ENCODE measurements at regions of chr14 and their contacts with region 1.

Region 1: GRCh38 chr14:76710056-76711010 is 50.9 kb upstream of the VASH1 start:
- DNase-seq: peak; percentile 44 to 50
- ATAC-seq: peak; percentile 67 to 80; a peak in 4 of 6 replicates
- H3K4me3 ChIP-seq: no peak overlapping the region
- H3K27ac ChIP-seq: no peak overlapping the region
- H3K4me1 ChIP-seq: no peaks in the 10 kb centered on the region
- CTCF ChIP-seq: peak; percentile 78
- EP300 ChIP-seq: no peak
- POLR2A ChIP-seq: no peak
- RAD21 ChIP-seq: peak; percentile 63 to 68

Region 2: DNA sequence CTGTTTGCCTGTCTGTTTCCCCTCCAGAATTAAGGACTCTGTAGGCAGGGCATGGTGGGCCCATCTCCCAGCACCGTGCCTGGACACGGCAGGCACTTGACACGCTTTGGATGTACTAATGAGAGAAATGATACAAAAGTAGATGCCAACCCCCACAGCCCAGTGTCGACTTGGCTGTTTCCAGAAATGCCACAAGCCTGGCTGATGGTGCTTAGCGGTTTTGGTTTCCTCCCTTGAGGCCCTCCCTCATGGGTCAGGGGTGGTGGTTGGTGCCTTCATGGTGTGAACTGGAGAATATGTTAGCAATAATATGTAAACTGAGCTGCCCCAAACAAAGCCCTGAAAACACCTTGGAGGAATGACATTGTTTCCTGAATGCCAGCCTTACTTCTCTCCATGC is 389.8 kb before region 1 on chr14:
- CTCF ChIA-PET with region 1: no interaction called
- POLR2A ChIA-PET with region 1: no interaction called
- DNase-seq: no peak
- ATAC-seq: no peak
- H3K4me3 ChIP-seq: no peak overlapping the region
- H3K27ac ChIP-seq: no peak overlapping the region
- H3K4me1 ChIP-seq: no peaks in the 10 kb centered on the region
- CTCF ChIP-seq: no peak
- EP300 ChIP-seq: no peak
- POLR2A ChIP-seq: no peak
- RAD21 ChIP-seq: no peak

Region 3: DNA sequence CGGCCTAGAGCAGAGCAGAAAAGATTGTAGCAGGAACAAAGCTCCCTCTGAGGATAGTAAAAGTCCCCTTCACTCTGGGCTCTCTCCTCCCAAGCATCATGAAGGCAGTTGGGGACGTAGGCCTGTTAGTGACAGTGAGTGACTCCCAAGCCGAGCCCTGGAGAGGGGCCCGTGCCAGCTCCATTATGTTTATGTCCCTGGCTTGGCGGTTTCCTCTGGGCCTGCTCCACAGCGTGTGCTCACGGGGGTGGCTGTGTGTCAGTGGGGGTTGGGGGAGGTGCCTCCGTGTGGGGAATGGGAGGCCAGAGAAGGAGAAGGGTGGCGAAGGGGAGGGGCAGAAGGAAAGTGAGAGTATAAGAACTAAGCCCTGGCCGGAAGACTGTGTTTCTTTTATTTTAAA is 119.1 kb before region 1 on chr14:
- CTCF ChIA-PET with region 1: no interaction called
- POLR2A ChIA-PET with region 1: no interaction called
- DNase-seq: no peak
- ATAC-seq: no peak
- H3K4me3 ChIP-seq: no peak overlapping the region
- H3K27ac ChIP-seq: no peak overlapping the region
- H3K4me1 ChIP-seq: no peaks in the 10 kb centered on the region
- CTCF ChIP-seq: no peak
- EP300 ChIP-seq: no peak
- POLR2A ChIP-seq: no peak
- RAD21 ChIP-seq: no peak

Region 4: GRCh38 chr14:76672123-76672522 is 38.2 kb before region 1 on chr14:
- CTCF ChIA-PET with region 1: no interaction called
- POLR2A ChIA-PET with region 1: no interaction called
- DNase-seq: no peak
- ATAC-seq: no peak
- H3K4me3 ChIP-seq: no peak overlapping the region
- H3K27ac ChIP-seq: no peak overlapping the region
- H3K4me1 ChIP-seq: no peaks in the 10 kb centered on the region
- CTCF ChIP-seq: no peak
- EP300 ChIP-seq: no peak
- POLR2A ChIP-seq: no peak
- RAD21 ChIP-seq: no peak

Region 5: GRCh38 chr14:76687611-76688382 is 22.5 kb before region 1 on chr14:
- CTCF ChIA-PET with region 1: interaction called, 62 read pairs
- POLR2A ChIA-PET with region 1: no interaction called
- DNase-seq: no peak
- ATAC-seq: no peak
- H3K4me3 ChIP-seq: no peak overlapping the region
- H3K27ac ChIP-seq: no peak overlapping the region
- H3K4me1 ChIP-seq: no peaks in the 10 kb centered on the region
- CTCF ChIP-seq: no peak
- EP300 ChIP-seq: no peak
- POLR2A ChIP-seq: no peak
- RAD21 ChIP-seq: no peak

Region 6: GRCh38 chr14:76699939-76700590 is 10.3 kb before region 1 on chr14:
- CTCF ChIA-PET with region 1: interaction called, 62 read pairs
- POLR2A ChIA-PET with region 1: no interaction called
- DNase-seq: no peak
- ATAC-seq: no peak
- H3K4me3 ChIP-seq: no peak overlapping the region
- H3K27ac ChIP-seq: no peak overlapping the region
- H3K4me1 ChIP-seq: 0 out of 3 replicates have a peak, but pooled peaks cover 3% of the 10 kb centered on the region
- CTCF ChIP-seq: no peak
- EP300 ChIP-seq: no peak
- POLR2A ChIP-seq: no peak
- RAD21 ChIP-seq: no peak

Region 7: DNA sequence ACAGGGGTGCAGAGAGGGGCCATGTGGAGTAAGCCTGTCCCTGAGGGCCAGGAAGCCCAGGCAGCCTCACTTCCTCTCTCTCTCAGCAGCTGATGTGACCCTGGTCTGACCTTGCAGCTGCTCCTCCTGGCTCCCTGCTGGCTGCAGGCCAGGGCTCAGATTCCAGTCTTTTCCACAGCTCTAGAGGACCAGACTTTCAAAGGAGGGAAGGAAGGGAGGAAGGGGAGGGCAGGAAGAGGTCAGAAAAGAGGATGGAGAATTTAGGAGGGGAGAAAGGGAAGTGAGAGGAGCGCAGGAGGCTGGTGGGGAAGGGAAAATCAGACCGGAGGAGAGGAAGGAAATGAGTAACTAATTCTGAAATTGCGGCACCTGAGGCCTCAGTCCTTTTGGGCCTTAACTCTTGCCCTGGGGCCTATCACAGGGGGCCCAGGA is 10.1 kb after region 1 on chr14:
- CTCF ChIA-PET with region 1: interaction called, 46 read pairs
- POLR2A ChIA-PET with region 1: no interaction called
- DNase-seq: no peak
- ATAC-seq: peak; percentile 26 to 54; a peak in 3 of 6 replicates
- H3K4me3 ChIP-seq: no peak overlapping the region
- H3K27ac ChIP-seq: peak overlapping the region in 1 of 2 experiments; percentile 43; a peak in 2 of 6 replicates
- H3K4me1 ChIP-seq: peaks cover 8% of the 10 kb centered on the region; the same call in 2 of the 3 replicates
- CTCF ChIP-seq: no peak
- EP300 ChIP-seq: no peak
- POLR2A ChIP-seq: no peak
- RAD21 ChIP-seq: no peak

Region 8: DNA sequence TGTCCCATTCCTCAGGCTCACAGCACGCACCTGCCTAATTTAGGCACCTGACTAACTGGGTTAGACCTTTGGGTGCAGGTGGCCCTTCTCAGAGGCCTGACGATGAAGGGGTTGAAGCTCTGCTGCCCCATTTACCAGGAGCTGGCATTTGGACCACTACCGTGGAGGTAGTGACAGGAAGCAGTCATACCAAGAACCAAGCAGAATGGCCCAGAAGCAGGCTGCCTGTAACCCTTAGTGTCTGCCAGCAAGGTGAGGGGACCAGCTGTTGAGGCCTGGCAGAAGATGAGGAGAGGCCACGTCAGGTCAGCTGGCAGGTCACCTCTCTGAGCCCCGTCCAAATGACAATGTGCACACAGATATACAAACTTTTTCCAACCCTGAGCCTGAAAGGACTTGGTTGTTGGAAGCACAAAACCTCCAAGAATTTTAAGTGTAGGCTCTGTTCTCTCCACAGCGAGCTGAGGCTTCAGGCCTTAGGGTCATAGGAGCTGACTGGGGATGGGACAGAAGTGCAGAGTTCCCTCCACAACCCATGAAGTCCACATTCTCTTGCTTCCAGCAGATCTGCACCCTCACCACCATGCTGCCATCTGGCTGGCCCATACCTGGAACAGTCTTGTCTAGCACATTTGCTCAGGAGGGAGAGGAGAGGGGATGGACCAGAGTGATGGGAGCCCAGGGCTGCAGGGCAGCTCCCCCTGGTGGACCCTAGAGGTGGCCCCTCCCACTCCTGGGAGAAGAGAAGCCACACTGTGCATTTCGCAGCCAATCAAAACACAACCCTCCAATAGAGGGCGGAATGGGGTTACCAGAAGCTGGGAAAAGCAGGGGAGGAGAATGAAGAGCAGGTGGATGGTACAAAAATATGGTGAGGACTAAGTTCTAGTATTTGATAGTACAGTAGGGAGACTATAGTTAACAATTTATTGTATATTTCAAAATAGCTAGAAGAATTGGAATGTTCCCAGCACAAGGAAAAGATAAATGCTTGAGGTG is 74.2 kb after region 1 on chr14:
- CTCF ChIA-PET with region 1: interaction called, 87 read pairs
- POLR2A ChIA-PET with region 1: no interaction called
- DNase-seq: peak; percentile 78 to 97
- ATAC-seq: peak; percentile 93 to 99
- H3K4me3 ChIP-seq: no peak overlapping the region
- H3K27ac ChIP-seq: no peak overlapping the region
- H3K4me1 ChIP-seq: no peaks in the 10 kb centered on the region
- CTCF ChIP-seq: peak; percentile 67
- EP300 ChIP-seq: no peak
- POLR2A ChIP-seq: no peak
- RAD21 ChIP-seq: peak; percentile 56 to 69

Region 9: DNA sequence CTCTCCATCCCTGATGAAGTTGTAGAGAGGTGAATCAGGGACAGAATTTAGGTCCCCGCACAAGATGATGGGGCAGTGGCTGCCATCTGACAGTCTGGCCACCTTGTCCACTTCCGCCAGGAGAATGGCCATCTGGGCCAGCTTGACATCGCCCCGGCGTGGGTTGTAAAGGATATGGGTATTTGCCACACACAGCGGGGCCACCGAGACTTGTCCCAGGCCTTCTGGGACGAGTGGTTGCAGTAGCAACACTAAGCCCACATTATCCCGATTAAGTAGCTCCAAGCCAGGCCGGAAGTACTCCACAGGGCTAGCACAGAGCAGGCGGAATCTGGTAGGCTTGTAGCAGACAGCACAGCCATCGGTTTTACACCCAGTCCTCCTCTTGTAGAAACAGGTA is 96.1 kb after region 1 on chr14:
- CTCF ChIA-PET with region 1: interaction called, 32 read pairs
- POLR2A ChIA-PET with region 1: interaction called, 6 read pairs
- DNase-seq: no peak
- ATAC-seq: no peak
- H3K4me3 ChIP-seq: no peak overlapping the region
- H3K27ac ChIP-seq: no peak overlapping the region
- H3K4me1 ChIP-seq: peaks cover 4% of the 10 kb centered on the region; the same call in 2 of the 3 replicates
- CTCF ChIP-seq: no peak
- EP300 ChIP-seq: no peak
- POLR2A ChIP-seq: no peak
- RAD21 ChIP-seq: no peak

Region 10: DNA sequence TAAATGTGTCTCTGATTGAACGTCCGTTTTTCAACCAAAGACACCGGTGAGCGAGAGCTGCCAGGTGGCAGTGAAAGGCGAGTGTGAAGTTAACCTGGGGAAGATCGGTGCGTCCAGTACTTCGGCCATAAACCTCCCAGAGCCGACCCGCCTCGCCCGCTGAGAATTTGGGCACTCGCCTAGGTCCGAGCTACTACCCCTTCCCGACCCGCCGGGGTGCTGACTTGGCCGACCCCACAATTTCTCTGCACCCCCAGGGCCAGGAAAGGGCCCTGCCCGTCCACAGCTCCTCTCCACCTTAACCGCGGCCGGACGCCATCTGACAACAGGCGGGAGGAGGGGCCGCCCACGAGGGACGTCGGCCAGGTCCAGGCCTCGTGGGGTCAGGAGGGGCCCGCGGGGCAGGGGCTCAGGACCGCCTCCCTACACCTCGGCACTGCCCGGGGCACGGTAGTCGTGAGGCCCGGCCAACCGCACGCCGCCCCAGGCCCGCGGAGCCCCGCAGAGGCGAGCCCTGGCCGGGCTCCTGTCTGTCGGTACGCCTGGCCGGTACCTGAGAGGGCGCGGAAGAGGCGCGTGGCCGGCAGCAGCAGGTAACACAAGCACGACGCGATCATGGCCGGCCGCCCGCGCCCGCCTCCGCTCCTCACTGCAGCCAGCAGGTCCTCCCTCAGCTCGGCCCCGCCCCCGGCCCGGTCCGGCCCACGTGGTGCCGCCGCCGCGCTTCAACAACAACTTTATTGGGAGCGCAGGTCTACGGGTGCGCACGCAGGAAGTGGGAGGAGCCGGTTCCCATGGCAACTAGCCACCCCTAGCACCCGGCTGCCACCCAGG is 102.1 kb after region 1 on chr14 and contains the start of gene ANGEL1:
- CTCF ChIA-PET with region 1: interaction called, 32 read pairs
- POLR2A ChIA-PET with region 1: interaction called, 6 read pairs
- DNase-seq: peak; percentile 79 to 96
- ATAC-seq: peak; percentile 87 to 96
- H3K4me3 ChIP-seq: peak within 1 kb of the TSS; percentile 70
- H3K27ac ChIP-seq: peak within 1 kb of the TSS; percentile 82 to 96
- H3K4me1 ChIP-seq: peaks cover 11% of the 10 kb centered on the region; the same call in 2 of the 3 replicates
- CTCF ChIP-seq: no peak
- EP300 ChIP-seq: no peak
- POLR2A ChIP-seq: peak; percentile 89
- RAD21 ChIP-seq: no peak
- polyA plus RNA-seq, gene ANGEL1: 17.6 and 22.2 TPM in 2 replicates